ENCODE measurements at regions of chr1 and their contacts with region 1.

Region 1: DNA sequence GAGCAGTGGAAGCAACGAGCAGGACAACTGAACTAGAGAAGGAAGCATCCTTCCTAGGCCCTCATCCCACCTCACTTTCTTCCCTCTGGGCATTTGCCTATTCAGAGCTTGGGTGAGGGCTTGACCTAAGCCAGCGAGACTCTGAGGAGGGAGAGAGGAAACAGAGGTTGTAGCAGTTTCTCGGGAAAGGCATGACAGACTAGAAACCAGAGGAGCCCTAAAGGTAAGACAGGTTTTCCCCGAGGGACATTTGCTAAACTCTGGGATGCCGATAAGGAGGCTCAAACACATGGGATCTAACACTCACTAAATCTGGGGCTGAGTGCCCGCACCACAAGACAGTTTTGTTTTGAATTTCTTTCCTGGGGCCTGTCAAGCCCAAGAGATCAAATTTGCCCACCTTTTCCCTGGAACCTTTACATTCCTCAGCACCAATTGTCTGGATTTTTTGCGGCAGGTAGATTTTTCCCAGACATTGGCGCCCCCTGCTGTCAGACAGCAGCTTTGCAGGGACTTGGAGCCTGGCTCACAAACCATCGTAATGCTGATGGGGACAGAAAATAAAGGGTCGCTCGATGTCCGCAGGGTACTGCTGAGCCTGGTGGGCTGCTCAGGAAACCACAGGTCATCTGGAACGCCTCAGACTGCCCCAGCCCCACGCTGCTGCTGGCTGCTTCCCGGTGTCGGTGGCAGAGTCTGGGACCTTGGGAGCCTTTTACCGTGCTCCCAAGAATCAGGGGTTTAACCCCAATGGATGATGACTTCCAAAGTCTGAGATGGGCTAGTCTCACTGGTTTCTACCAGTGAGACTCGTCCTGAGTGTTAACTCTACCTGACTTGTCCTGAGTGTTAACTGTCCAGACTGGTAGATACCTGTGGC is 23.4 kb upstream of the TSPAN2 start:
- DNase-seq: peak; percentile 39
- H3K4me3 ChIP-seq: no peak overlapping the region
- H3K27ac ChIP-seq: peak overlapping the region; percentile 74
- H3K4me1 ChIP-seq: peaks cover 39% of the 10 kb centered on the region
- H3K27me3 ChIP-seq: no peaks in the 10 kb centered on the region

Region 2: GRCh38 chr1:114979278-114979891 is 133.4 kb before region 1 on chr1:
- in situ Hi-C with region 1: loop called (anchors 10 kb)
- DNase-seq: peak; percentile 47
- H3K4me3 ChIP-seq: no peak overlapping the region
- H3K27ac ChIP-seq: no peak overlapping the region
- H3K4me1 ChIP-seq: no peaks in the 10 kb centered on the region
- H3K27me3 ChIP-seq: no peaks in the 10 kb centered on the region

Region 3: DNA sequence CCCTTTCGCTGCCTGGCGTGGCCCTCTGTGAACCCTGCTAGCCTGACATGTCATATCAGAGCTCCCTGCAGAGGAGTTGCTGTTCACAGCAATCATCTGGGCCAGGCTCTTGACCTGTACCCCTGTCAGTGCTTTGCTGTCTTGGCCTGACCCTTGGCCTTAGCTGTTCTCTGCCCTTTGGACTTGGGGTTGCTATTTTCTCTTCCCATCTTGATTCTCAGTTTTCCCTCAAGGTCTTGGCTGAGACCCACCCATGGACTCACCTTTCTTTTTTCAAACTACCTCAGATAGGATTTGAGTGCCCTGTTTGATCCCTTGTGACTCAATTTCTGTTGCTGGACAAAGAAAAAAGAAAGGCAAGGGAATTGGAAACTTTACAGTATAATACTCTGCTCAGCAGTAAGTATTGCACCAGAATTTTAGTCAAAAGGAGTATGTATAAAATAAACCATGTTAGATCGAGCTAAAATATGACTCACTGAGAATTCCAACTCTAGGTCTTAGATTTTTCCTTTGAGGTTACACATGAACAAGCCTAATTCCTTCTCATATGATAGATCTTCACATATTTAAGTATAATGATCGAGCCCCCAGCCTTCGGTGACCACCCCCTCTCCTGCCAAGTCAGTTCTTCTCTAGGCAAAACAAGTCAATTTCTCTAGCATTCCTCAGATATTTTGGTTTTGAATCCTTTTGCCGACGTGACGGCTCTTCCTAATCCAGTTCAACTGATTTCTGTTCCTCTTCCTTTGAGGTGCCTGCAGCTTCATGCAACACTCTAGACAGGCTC is 114.8 kb after region 1 on chr1:
- in situ Hi-C with region 1: no loop called
- DNase-seq: peak; percentile 56
- H3K4me3 ChIP-seq: no peak overlapping the region
- H3K27ac ChIP-seq: peak overlapping the region; percentile 35; the same call in 1 of the 2 replicates
- H3K4me1 ChIP-seq: peaks cover 11% of the 10 kb centered on the region; the same call in 1 of the 2 replicates
- H3K27me3 ChIP-seq: no peaks in the 10 kb centered on the region

Measured in GM23248 (cell line).